ENCODE measurements at regions of chr14 and their contacts with region 1.

Region 1: DNA sequence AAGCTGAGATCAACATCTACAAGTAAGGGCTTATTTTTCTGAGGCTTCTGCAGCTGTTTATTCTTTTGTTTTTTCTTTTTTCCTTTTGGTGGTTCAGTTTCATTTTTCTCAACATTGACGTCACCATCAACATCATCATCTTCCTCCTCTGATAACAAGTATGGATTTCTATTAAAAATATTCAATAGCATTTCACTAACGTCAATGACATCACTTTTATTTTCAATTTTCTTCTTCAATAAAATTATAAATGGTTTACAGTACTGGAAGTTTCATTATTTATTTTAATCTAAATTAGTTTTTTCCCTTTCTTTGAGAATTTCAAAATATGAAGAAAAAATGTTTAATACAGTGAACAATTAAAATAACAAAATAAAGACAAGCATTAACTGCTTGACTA is 23.9 kb downstream of the NEMF start:
- DNase-seq: no peak

Region 2: DNA sequence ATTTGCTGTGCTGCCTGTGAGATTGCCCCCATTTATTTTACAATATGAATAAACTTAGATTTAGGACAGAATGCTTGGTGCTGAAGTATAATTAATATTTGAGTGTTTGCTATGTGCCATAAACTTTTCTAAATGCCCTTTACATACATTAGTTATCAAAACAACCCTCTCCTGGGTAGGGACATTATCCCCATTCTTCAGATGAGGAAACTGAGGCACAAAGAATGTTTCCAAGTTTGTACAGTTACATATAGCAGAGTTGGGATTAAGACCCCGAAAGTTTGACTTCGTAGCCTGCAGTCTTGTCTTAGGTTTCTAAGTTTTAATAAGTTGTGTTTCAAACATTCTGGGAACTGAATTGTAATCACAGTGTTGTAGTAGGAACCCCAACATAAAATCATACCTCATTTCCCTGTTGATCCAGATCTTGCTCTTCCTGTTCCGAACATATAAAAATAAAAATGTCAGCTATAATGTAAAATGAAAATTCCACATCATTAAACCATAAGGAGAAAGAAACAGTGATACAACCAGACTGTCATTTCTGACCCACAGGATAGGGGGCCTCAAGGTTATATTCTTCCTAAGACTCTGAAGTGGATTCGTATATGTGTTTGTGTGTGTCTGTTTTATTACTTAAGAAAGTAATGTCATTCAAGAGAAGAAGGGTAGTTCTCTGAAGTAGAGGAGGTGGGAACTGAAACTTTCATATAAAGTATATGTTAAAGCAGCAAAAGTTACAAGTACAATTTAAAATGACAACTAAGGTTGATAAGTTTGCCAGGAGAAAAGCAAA is 42.1 kb before region 1 on chr14:
- intact Hi-C with region 1: loop called in 1 of 2 experiments (anchors 10 kb)
- DNase-seq: no peak

Region 3: DNA sequence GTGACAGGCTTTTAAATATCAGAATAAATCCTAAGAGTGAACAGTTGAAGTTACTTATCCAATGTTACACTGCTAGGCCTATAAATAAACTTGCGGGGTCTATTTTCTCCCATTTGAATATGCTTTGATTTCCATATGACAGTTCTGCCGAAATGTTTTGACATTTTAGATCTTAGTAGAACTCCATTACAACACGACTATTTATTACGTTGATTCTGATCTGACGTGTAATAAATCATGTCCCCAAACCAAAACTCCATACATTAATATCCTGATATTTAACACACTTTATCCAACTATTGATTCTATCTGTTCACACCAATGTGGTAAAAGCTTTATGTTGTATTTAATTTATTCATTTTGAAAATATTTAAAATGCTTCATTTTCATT is 40.1 kb after region 1 on chr14:
- intact Hi-C with region 1: no loop called
- DNase-seq: no peak